ENCODE measurements at regions of chr1 and their contacts with region 1.

Region 1: DNA sequence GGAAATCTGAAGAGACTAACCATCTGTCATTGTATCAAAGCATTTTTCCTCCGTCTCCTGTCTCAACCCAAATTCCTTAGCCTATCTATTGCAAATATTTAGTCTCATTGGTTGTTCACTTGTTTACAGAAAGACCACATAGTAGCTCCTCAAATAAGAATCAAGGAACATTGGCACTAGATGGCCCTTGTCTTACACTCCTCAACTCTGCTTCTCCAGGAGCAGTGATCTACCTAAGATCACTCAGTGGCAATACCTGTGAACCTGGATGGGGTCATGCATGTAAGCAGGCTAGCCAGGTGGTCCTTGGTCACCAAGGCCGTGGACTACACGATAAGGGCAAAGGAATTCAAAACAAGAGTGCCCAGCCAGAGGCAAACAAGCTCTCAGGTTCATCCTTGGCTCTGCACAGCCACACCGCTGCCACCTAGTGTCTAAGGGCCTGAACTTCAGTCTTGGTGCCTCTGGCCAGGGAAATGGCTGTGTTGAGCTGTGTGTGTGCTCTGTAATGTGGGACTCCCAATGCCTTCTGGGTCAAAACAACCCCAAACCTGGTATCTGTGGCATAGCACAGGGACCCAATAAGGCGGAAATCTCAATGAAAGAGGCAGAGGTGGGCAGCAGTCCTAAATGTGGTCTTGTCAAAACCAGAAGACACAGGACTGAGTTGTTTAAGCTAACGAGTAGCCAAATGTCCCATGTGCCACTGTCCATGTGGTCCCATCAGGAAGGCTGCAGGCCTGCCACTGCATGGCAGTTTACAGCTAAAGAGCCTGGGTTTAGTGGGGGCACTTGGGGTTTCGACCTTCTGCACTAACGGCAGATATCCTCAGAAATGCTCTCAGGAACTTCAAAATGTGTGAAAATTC is 54.5 kb downstream of the GPR161 start:
- DNase-seq: peak; percentile 55 to 65
- ATAC-seq: peak; percentile 36 to 75 (median 64)
- H3K4me3 ChIP-seq: no peak overlapping the region
- H3K27ac ChIP-seq: peak overlapping the region in 4 of 10 donors; percentile 55 to 73 (median 63)
- H3K4me1 ChIP-seq: peaks cover 2 to 68% (median 25%) of the 10 kb centered on the region in 9 donors
- H3K27me3 ChIP-seq: no peaks in the 10 kb centered on the region
- CTCF ChIP-seq: peak; percentile 74 to 93 (median 87)

Region 2: GRCh38 chr1:167721617-167722151 is 360.6 kb before region 1 on chr1 and contains the start of gene MPZL1:
- intact Hi-C with region 1: loop called in 5 of 10 experiments (anchors 5 to 10 kb)
- DNase-seq: peak; percentile 96 to 98
- ATAC-seq: peak; percentile 99
- H3K4me3 ChIP-seq: peak within 1 kb of the TSS; percentile 65 to 99 (median 94)
- H3K27ac ChIP-seq: peak within 1 kb of the TSS; percentile 51 to 94 (median 88)
- H3K4me1 ChIP-seq: peaks cover 4 to 49% (median 37%) of the 10 kb centered on the region in 9 donors
- H3K27me3 ChIP-seq: no peaks in the 10 kb centered on the region
- CTCF ChIP-seq: no peak
- total RNA-seq, gene MPZL1: 15.6 to 52.5 (median 25.2) TPM

Region 3: GRCh38 chr1:167904652-167905130 is 177.6 kb before region 1 on chr1:
- intact Hi-C with region 1: loop called in 1 of 10 experiments (anchors 10 kb)
- DNase-seq: no peak
- ATAC-seq: peak in 3 of 8 donors; percentile 39 to 57 (median 51)
- H3K4me3 ChIP-seq: no peak overlapping the region
- H3K27ac ChIP-seq: peak overlapping the region in 1 of 10 donors; percentile 46
- H3K4me1 ChIP-seq: peaks cover 0 to 24% (median 0%) of the 10 kb centered on the region in 9 donors
- H3K27me3 ChIP-seq: no peaks in the 10 kb centered on the region
- CTCF ChIP-seq: no peak

Region 4: DNA sequence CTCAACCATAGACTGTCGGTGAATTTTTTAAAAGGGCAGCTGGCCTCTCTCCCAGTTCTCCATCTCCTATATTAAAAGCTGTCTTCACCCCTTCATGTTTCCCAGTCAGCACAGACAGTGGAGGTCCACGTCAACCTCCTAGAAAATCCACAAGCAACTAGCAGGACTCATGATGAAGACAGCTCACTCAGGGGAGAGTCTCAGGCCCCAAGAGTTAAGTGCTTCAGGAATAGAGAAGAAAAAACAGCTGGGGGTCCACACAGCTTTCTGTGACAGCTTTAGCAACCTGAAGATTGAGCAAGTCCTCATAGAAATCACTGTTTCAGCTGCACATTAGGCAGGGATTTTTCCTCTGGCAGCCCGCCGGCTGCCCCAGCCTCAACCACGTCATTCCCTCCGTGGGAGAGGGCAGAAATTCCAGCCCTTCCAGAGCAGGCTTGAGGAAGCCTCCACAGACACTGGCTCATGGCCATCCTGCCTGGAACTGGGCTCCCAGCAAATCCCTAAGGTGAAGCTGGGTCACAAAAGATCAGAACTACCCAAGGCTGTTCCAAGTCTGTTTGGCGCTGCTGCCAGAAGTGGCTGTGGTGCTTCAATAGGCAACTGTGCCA is 39.3 kb after region 1 on chr1:
- intact Hi-C with region 1: loop called in 1 of 10 experiments (anchors 5 kb)
- DNase-seq: peak; percentile 80 to 86
- ATAC-seq: peak; percentile 84 to 96 (median 94)
- H3K4me3 ChIP-seq: peak overlapping the region in 1 of 10 donors; percentile 12
- H3K27ac ChIP-seq: peak overlapping the region in 8 of 10 donors; percentile 27 to 71 (median 42)
- H3K4me1 ChIP-seq: peaks cover 0 to 23% (median 16%) of the 10 kb centered on the region in 9 donors
- H3K27me3 ChIP-seq: no peaks in the 10 kb centered on the region
- CTCF ChIP-seq: no peak

Region 5: DNA sequence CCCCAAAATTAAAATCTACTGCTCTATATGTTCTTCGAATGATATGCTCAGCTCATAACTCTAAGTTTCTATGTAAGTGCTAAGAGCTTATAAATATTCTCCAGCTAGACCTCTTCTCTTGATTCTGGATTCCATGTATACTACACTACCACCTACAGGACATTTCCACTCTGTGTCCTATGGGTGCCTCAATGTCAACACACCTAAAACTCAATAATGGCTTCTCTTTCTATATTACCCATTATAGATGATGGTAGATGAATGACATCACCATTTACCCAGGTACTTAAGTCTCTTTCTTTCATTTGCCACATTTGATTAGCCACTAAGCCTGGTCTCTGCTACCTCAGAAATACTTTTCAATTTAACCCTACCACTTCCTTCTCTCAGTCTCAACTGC is 239.7 kb after region 1 on chr1:
- intact Hi-C with region 1: loop called in 1 of 10 experiments (anchors 10 kb)
- DNase-seq: no peak
- ATAC-seq: peak in 3 of 8 donors; percentile 59 to 63 (median 59)
- H3K4me3 ChIP-seq: no peak overlapping the region
- H3K27ac ChIP-seq: no peak overlapping the region
- H3K4me1 ChIP-seq: peaks cover 0 to 8% (median 0%) of the 10 kb centered on the region in 9 donors
- H3K27me3 ChIP-seq: no peaks in the 10 kb centered on the region
- CTCF ChIP-seq: peak in 8 of 9 donors; percentile 4 to 54 (median 40)

Measured in heart right ventricle (tissue), 16 donors.